Activated naive CD4-positive, alpha-beta T cell treated with anti-CD3 and anti-CD28 coated beads for 36 hours (primary cell): ENCODE measurements at regions of chr14 and their contacts with region 1.

Region 1: GRCh38 chr14:52458721-52459085 is 93.6 kb downstream of the TXNDC16 start:
- DNase-seq: no peak
- H3K4me3 Mint-ChIP-seq: no peak overlapping the region
- H3K27ac Mint-ChIP-seq: no peak overlapping the region
- H3K4me1 Mint-ChIP-seq: peaks cover 6% of the 10 kb centered on the region
- H3K27me3 Mint-ChIP-seq: no peaks in the 10 kb centered on the region

Region 2: DNA sequence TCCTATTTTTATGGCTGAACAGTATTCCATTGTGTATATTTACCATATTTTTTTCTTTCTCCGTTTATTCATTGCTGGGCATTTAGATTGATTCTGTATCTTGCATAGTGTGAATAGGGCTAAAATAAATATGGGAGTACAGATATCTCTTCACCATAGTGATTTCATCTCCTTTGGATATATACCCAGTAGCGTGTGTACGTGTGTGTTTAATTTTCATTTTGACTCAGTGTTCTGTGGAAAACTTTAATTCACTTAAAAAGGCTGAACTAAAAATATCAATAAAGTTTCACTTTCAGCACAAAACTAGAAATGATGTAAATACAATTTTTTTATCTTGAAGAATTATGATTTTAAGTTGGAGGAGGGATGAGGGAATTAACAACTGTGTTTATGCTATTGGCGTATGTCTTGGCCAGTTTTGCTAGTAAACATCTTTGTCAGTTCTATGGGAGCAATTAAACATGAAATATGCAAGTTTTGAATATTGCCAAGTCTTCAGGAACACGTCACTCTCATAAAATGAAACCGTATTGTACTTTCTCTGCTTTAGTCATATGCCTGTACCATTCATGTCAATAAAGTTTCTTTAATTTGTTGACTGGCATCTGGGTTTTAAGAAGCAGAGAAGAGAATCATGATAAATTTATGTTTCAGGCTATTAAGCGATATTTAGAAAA is 44.8 kb before region 1 on chr14:
- CTCF ChIA-PET with region 1: interaction called, 3 read pairs
- intact Hi-C with region 1: loop called (anchors 2 kb)
- DNase-seq: no peak
- H3K4me3 Mint-ChIP-seq: peak overlapping the region; percentile 14
- H3K27ac Mint-ChIP-seq: peak overlapping the region; percentile 85
- H3K4me1 Mint-ChIP-seq: peaks cover 39% of the 10 kb centered on the region
- H3K27me3 Mint-ChIP-seq: no peaks in the 10 kb centered on the region